ENCODE measurements at regions of chr17 and their contacts with region 1.

Region 1: GRCh38 chr17:21173543-21173942 is 40.4 kb downstream of the TMEM11 start:
- DNase-seq: peak; percentile 77 to 91
- ATAC-seq: peak; percentile 88 to 92
- H3K4me3 ChIP-seq: no peak overlapping the region
- H3K27ac ChIP-seq: peak overlapping the region; percentile 92 to 98 (median 96)
- H3K4me1 ChIP-seq: peaks cover 64 to 66% of the 10 kb centered on the region in 2 donors
- H3K27me3 ChIP-seq: no peaks in the 10 kb centered on the region
- CTCF ChIP-seq: no peak
- POLR2A ChIP-seq: peak in 1 of 2 donors; percentile 17

Region 2: DNA sequence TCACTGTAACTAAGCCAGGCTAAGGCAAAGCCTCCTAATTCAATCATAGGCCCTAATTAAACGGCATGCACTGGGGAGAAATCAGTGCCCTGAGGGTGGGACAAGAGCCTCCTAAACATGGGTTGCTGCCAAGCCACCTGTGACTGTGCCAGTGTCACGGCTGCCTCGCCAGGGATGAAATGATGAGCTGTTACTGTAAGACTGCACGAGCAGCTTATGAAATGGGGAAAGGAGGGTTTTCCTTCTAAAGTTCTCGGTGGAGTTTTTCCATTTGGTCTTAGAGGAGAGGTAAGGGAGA is 27.7 kb after region 1 on chr17:
- in situ Hi-C with region 1: no loop called
- intact Hi-C with region 1: loop called (anchors 2 kb)
- DNase-seq: peak in 1 of 2 donors; percentile 61
- ATAC-seq: peak; percentile 18 to 25
- H3K4me3 ChIP-seq: peak overlapping the region in 1 of 4 donors; percentile 5
- H3K27ac ChIP-seq: peak overlapping the region; percentile 80 to 98 (median 91)
- H3K4me1 ChIP-seq: peaks cover 77 to 81% of the 10 kb centered on the region in 2 donors
- H3K27me3 ChIP-seq: no peaks in the 10 kb centered on the region
- CTCF ChIP-seq: no peak
- POLR2A ChIP-seq: no peak

Measured in gastrocnemius medialis (tissue), 4 donors.